ENCODE measurements at regions of chr10 and their contacts with region 1.

Region 1: GRCh38 chr10:109883859-109884771 is 39.2 kb downstream of the XPNPEP1 start:
- DNase-seq: no peak
- ATAC-seq: peak; percentile 87
- H3K4me3 ChIP-seq: no peak overlapping the region
- H3K27ac ChIP-seq: no peak overlapping the region
- H3K4me1 ChIP-seq: peaks cover 15% of the 10 kb centered on the region
- H3K27me3 ChIP-seq: no peaks in the 10 kb centered on the region
- CTCF ChIP-seq: peak; percentile 93 to 95 (median 94); a peak in 5 of 6 replicates
- EP300 ChIP-seq: no peak
- POLR2A ChIP-seq: no peak
- RAD21 ChIP-seq: peak; percentile 96

Region 2: DNA sequence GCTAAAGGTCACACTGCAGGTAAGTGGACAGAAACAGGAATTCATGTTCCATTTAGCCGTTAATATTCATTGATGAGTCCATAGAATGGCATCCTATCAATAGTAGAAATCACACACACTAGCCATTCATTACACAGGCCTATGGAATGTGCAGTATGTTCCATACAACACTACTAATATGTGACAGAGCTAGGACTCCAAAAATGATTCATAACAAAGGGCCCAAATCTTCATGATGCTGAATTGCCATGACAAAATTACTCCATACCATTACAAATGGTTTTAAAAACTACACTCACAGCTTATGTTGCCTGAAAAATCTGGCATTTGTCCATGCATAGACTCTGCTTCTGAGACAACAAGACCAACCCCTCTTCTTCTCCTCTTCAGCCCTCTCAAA is 509.9 kb before region 1 on chr10:
- CTCF ChIA-PET with region 1: no interaction called
- POLR2A ChIA-PET with region 1: no interaction called
- RAD21 ChIA-PET with region 1: no interaction called
- SMC1A ChIA-PET with region 1: no interaction called
- in situ Hi-C with region 1: no loop called
- intact Hi-C with region 1: no loop called
- DNase-seq: no peak
- ATAC-seq: no peak
- H3K4me3 ChIP-seq: no peak overlapping the region
- H3K27ac ChIP-seq: no peak overlapping the region
- H3K4me1 ChIP-seq: no peaks in the 10 kb centered on the region
- H3K27me3 ChIP-seq: no peaks in the 10 kb centered on the region
- CTCF ChIP-seq: no peak
- EP300 ChIP-seq: no peak
- POLR2A ChIP-seq: no peak
- RAD21 ChIP-seq: no peak

Region 3: DNA sequence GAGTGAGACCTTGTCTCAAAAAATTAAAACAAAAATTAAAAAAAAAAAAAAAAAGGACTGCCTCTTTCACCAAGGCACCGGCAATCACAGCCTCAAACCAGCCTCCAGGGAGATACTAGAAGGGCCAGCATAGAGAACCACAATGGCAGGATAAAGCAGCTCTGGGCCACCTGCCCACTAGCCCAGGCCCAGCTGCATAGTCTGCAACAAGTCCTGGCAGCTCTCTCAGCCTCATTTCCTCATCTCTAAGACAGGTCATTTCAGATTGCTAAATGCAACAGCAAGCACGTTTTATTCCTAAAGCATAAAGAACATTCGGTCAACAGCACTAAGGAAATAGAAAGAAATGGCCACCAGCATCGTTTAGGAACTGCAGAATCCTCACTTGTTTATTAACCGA is 10.4 kb after region 1 on chr10:
- CTCF ChIA-PET with region 1: interaction called, 20 read pairs
- POLR2A ChIA-PET with region 1: interaction called, 3 read pairs
- RAD21 ChIA-PET with region 1: interaction called, 5 read pairs
- SMC1A ChIA-PET with region 1: interaction called, 9 read pairs
- in situ Hi-C with region 1: no loop called
- intact Hi-C with region 1: no loop called
- DNase-seq: no peak
- ATAC-seq: no peak
- H3K4me3 ChIP-seq: no peak overlapping the region
- H3K27ac ChIP-seq: no peak overlapping the region
- H3K4me1 ChIP-seq: peaks cover 9% of the 10 kb centered on the region; the same call in 1 of the 2 replicates
- H3K27me3 ChIP-seq: no peaks in the 10 kb centered on the region
- CTCF ChIP-seq: no peak
- EP300 ChIP-seq: no peak
- POLR2A ChIP-seq: no peak
- RAD21 ChIP-seq: no peak

Region 4: DNA sequence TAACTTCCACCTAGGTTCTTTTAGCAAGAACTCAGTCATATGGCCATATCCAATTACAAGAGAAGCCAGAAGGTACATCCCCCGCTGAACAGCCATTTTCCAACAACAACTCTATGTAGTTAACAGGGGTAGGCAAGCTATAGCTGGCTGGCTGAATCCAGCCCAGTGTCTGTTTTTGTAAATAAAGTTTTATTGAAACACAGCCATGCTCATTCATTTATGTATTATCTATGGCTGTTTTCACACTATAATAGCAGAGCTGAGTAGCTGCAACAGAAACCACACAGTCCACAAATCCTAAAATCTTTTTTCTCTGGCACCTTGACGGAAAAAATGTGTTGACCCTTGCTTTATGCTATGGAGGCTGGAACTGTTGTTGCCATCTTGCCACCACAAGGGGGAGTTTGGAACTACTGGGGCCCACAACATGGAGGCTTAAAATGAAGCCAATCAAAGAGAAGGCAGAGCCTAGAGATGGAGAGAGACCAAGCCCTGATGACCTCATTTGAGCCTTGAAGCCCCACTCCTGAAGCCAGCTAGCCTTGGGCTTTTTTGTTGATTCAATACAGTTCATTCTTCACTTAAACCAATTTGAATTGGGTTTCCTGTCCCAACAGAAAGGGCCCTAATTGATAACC is 72.5 kb after region 1 on chr10:
- CTCF ChIA-PET with region 1: interaction called, 34 read pairs
- POLR2A ChIA-PET with region 1: interaction called, 3 read pairs
- RAD21 ChIA-PET with region 1: interaction called, 11 read pairs
- SMC1A ChIA-PET with region 1: interaction called, 13 read pairs
- in situ Hi-C with region 1: no loop called
- intact Hi-C with region 1: loop called (anchors 1 kb)
- DNase-seq: no peak
- ATAC-seq: peak; percentile 87
- H3K4me3 ChIP-seq: no peak overlapping the region
- H3K27ac ChIP-seq: peak overlapping the region; percentile 55
- H3K4me1 ChIP-seq: peaks cover 23% of the 10 kb centered on the region
- H3K27me3 ChIP-seq: no peaks in the 10 kb centered on the region
- CTCF ChIP-seq: peak; percentile 57 to 76 (median 67)
- EP300 ChIP-seq: no peak
- POLR2A ChIP-seq: no peak
- RAD21 ChIP-seq: peak; percentile 58

Region 5: GRCh38 chr10:110007701-110008517 is 123.8 kb after region 1 on chr10 and contains the start of gene ADD3:
- CTCF ChIA-PET with region 1: interaction called, 31 read pairs
- POLR2A ChIA-PET with region 1: no interaction called
- RAD21 ChIA-PET with region 1: interaction called, 4 read pairs
- SMC1A ChIA-PET with region 1: interaction called, 4 read pairs
- in situ Hi-C with region 1: no loop called
- intact Hi-C with region 1: loop called (anchors 10 kb)
- DNase-seq: peak; percentile 48
- ATAC-seq: peak; percentile 81
- H3K4me3 ChIP-seq: peak within 1 kb of the TSS; percentile 90
- H3K27ac ChIP-seq: peak within 1 kb of the TSS; percentile 56
- H3K4me1 ChIP-seq: peaks cover 27% of the 10 kb centered on the region
- H3K27me3 ChIP-seq: no peaks in the 10 kb centered on the region
- CTCF ChIP-seq: no peak
- EP300 ChIP-seq: no peak
- POLR2A ChIP-seq: peak; percentile 79
- RAD21 ChIP-seq: no peak
- polyA plus RNA-seq, gene ADD3: 27.3 to 28.5 TPM

Region 6: GRCh38 chr10:110109511-110109910 is 225.4 kb after region 1 on chr10:
- CTCF ChIA-PET with region 1: interaction called, 11 read pairs
- POLR2A ChIA-PET with region 1: no interaction called
- RAD21 ChIA-PET with region 1: no interaction called
- SMC1A ChIA-PET with region 1: interaction called, 3 read pairs
- in situ Hi-C with region 1: no loop called
- intact Hi-C with region 1: no loop called
- DNase-seq: no peak
- ATAC-seq: no peak
- H3K4me3 ChIP-seq: no peak overlapping the region
- H3K27ac ChIP-seq: no peak overlapping the region
- H3K4me1 ChIP-seq: no peaks in the 10 kb centered on the region
- H3K27me3 ChIP-seq: no peaks in the 10 kb centered on the region
- CTCF ChIP-seq: no peak
- EP300 ChIP-seq: no peak
- POLR2A ChIP-seq: no peak
- RAD21 ChIP-seq: no peak

Region 7: GRCh38 chr10:110279407-110279986 is 395.4 kb after region 1 on chr10:
- CTCF ChIA-PET with region 1: interaction called, 12 read pairs
- POLR2A ChIA-PET with region 1: no interaction called
- RAD21 ChIA-PET with region 1: interaction called, 6 read pairs
- SMC1A ChIA-PET with region 1: interaction called, 7 read pairs
- in situ Hi-C with region 1: no loop called
- intact Hi-C with region 1: loop called (anchors 5 kb)
- DNase-seq: peak; percentile 28
- ATAC-seq: peak; percentile 75
- H3K4me3 ChIP-seq: no peak overlapping the region
- H3K27ac ChIP-seq: no peak overlapping the region
- H3K4me1 ChIP-seq: no peaks in the 10 kb centered on the region
- H3K27me3 ChIP-seq: no peaks in the 10 kb centered on the region
- CTCF ChIP-seq: peak; percentile 65 to 77 (median 68); a peak in 5 of 6 replicates
- EP300 ChIP-seq: no peak
- POLR2A ChIP-seq: no peak
- RAD21 ChIP-seq: peak; percentile 87

Measured in GM12878 (cell line).